Psoas muscle (tissue), 8 donors: ENCODE measurements at regions of chr6 and their contacts with region 1.

Region 1: DNA sequence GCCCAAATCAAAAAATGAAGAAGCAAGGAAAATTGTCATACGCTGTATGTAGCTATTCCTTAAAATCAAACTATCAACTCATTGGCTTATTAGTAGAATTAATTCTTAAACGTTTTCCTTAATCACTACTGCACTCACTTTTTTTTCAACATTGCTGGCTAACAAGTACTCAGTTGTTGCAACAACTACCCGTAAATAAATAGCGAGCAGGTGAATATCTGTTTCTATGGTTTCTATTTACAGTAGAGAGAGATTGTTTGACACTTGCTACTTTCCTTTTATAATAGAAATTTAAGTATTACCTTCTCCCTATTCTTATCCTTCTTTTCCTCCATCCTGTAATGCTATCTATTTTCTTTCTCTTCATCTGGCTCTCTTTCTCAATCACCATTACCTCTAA is 25.1 kb downstream of the FRK start:
- DNase-seq: no peak
- ATAC-seq: peak in 1 of 4 donors; percentile 37
- H3K4me3 ChIP-seq: peak overlapping the region; percentile 43
- H3K27ac ChIP-seq: no peak overlapping the region
- H3K4me1 ChIP-seq: peaks cover 15% of the 10 kb centered on the region
- H3K27me3 ChIP-seq: no peaks in the 10 kb centered on the region
- CTCF ChIP-seq: no peak

Region 2: GRCh38 chr6:115969207-115969929 is 66.2 kb before region 1 on chr6:
- intact Hi-C with region 1: no loop called
- DNase-seq: no peak
- ATAC-seq: no peak
- H3K4me3 ChIP-seq: no peak overlapping the region
- H3K27ac ChIP-seq: no peak overlapping the region
- H3K4me1 ChIP-seq: peaks cover 4% of the 10 kb centered on the region
- H3K27me3 ChIP-seq: no peaks in the 10 kb centered on the region
- CTCF ChIP-seq: no peak

Region 3: GRCh38 chr6:116074732-116075390 is 39.2 kb after region 1 on chr6:
- intact Hi-C with region 1: loop called in 1 of 2 experiments (anchors 1 kb)
- DNase-seq: no peak
- ATAC-seq: peak; percentile 77 to 93 (median 89)
- H3K4me3 ChIP-seq: no peak overlapping the region
- H3K27ac ChIP-seq: peak overlapping the region; percentile 78
- H3K4me1 ChIP-seq: peaks cover 15% of the 10 kb centered on the region
- H3K27me3 ChIP-seq: no peaks in the 10 kb centered on the region
- CTCF ChIP-seq: no peak

Region 4: GRCh38 chr6:116672306-116672705 is 636.7 kb after region 1 on chr6:
- intact Hi-C with region 1: no loop called
- DNase-seq: no peak
- ATAC-seq: no peak
- H3K4me3 ChIP-seq: no peak overlapping the region
- H3K27ac ChIP-seq: no peak overlapping the region
- H3K4me1 ChIP-seq: peaks cover 7% of the 10 kb centered on the region
- H3K27me3 ChIP-seq: no peaks in the 10 kb centered on the region
- CTCF ChIP-seq: no peak